ENCODE measurements at regions of chr4 and their contacts with region 1.

Region 1: DNA sequence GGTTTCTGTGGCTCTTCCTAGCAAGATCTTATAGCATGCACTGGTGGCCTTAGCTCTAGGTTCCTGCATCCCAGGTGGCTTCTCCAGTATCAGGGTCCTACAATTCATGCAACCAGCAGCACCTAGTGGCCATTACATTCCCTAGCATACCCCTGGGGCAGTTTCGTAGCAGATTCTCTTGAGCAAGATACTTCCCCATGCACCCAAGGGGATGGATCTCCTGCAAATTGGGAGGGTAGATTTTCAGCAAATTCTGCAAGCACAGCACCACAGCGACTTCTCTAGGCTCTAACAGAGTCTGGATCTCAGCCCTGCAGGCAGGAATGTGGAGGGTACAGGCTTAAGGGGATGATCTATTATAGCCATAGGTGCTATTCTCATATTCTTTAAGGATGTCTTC is 13.1 kb upstream of the SLC9B1 start:
- DNase-seq: peak; percentile 22 to 34
- H3K4me3 ChIP-seq: no peak overlapping the region
- H3K27ac ChIP-seq: no peak overlapping the region
- H3K4me1 ChIP-seq: no peaks in the 10 kb centered on the region
- H3K27me3 ChIP-seq: no peaks in the 10 kb centered on the region
- CTCF ChIP-seq: peak; percentile 48; the same call in 1 of the 2 replicates

Region 2: DNA sequence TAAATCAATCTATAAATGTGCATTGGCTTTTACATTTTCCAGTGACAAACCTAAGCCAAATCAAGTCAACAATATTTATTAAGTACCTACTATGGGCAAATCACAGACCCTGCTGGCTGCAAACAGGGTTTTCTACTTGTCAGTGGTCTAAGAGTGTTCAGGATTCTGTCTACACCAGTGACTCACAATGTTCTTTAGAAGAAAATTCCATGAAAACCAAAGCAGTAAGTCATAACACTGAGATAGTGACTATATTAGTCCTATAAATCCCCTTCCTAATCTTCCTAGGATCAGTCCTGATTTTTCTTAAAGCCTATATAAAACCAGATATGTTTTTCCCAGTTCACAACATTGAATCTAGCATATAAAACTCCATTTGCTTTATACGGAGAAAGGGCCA is 1754.9 kb before region 1 on chr4:
- CTCF ChIA-PET with region 1: no interaction called
- POLR2A ChIA-PET with region 1: interaction called, 14 read pairs
- intact Hi-C with region 1: no loop called
- DNase-seq: no peak
- H3K4me3 ChIP-seq: no peak overlapping the region
- H3K27ac ChIP-seq: no peak overlapping the region
- H3K4me1 ChIP-seq: no peaks in the 10 kb centered on the region
- H3K27me3 ChIP-seq: no peaks in the 10 kb centered on the region
- CTCF ChIP-seq: no peak

Region 3: DNA sequence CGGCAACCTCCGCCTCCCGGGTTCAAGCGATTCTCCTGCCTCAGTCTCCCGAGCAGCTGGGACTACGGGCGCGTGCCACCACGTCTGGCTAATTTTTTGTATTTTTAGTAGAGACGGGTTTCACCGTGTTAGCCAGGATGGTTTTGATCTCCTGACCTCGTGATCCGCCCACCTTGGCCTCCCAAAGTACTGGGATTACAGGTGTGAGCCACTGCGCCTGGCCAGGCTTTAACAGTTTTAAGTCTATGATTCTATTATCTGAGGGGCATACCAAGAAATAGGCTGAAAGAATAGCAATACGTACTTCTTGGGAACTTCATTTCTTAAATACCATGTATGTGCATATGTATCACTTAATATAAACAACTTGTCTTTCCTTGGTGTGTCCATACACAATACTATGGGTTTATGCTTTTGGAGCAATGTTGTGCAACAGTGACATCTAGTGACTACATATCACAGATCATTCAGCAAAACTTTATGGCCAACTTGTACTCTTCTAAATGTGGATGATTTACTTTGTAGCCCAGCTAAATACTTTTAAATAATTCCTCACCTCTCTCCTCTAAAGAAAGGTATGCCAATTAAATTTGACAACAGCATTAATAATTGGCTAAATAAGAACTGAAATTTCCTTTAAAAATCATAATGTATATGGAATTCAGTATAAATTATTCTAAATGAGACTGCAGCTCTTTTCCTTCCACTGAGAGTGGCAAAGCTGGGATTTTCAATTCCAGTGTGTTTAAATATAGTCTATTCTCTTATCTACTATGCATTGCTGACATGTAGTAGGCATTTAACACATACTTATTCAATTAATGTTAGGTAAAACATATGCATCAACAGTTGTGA is 23.5 kb before region 1 on chr4:
- CTCF ChIA-PET with region 1: no interaction called
- POLR2A ChIA-PET with region 1: no interaction called
- intact Hi-C with region 1: loop called (anchors 1 kb)
- DNase-seq: peak in 1 of 2 experiments; percentile 52
- H3K4me3 ChIP-seq: no peak overlapping the region
- H3K27ac ChIP-seq: no peak overlapping the region
- H3K4me1 ChIP-seq: peaks cover 10% of the 10 kb centered on the region
- H3K27me3 ChIP-seq: no peaks in the 10 kb centered on the region
- CTCF ChIP-seq: peak; percentile 64

Region 4: DNA sequence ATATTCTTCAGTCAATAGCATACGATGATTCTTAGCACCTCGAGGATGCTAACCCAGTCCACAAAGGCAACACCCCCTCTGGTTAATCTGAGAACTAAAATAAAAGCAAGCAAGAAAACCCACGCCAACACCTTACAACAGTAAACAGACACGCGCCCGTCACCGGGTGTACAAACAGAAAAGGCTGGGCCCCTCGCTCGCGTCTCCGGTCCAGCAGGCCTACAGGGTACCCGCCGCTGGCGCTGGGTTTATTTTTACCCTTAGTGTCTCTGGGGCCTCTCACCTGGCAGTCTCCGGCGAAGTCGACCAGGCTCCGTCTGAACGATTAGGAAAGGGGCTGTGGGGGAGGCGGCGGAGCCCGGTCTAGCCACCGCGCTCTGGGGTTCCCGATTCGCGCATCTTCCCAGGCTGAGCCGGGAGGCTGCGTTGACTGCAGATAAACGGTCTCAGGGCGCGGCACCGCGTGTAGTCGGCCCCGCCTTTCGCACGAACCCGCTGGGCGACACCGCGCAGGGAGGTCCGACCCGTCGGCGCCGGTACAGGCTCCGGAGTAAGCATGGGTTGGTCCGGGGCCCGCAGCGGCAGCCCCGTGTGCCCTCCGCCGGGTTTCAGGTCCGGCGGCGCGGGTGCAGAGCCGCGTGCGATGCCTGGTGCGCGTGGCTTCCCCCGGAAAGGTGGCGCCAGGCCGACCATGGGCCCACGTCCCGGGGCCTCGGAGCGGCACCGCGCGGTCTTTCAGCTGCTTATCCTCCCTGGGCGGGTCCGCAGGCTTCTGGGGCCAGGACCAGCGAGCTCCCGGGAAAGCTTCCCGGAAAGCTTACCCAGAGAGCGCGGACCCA is 43.5 kb after region 1 on chr4:
- CTCF ChIA-PET with region 1: no interaction called
- POLR2A ChIA-PET with region 1: no interaction called
- intact Hi-C with region 1: no loop called
- DNase-seq: peak in 1 of 2 experiments; percentile 34
- H3K4me3 ChIP-seq: peak overlapping the region; percentile 82
- H3K27ac ChIP-seq: peak overlapping the region; percentile 51
- H3K4me1 ChIP-seq: peaks cover 21% of the 10 kb centered on the region
- H3K27me3 ChIP-seq: no peaks in the 10 kb centered on the region
- CTCF ChIP-seq: no peak

Measured in PC-9 (cell line).